ENCODE measurements at regions of chr16 and their contacts with region 1.

Region 1: GRCh38 chr16:63539276-63539675 is 1503.0 kb upstream of the CDH8 start:
- DNase-seq: no peak

Region 2: DNA sequence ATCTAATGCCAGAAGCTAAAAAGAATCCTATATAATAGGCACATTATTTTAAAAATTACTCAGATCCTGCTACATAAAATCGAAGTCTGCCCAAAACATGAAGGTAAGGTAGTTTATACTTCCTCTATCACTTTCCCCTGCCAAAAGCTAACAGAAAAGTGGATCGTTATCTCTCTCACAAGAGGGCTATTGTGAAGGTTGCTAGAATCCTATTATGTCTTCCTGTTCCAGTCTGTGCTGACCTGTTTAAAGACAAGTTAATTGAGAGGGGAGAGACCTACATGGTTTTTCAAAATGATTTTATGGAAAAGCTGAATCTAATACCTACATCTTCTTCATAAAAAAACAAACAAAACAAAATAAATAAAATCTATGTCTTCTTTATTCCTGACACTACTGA is 92.2 kb before region 1 on chr16:
- intact Hi-C with region 1: no loop called
- DNase-seq: no peak

Region 3: DNA sequence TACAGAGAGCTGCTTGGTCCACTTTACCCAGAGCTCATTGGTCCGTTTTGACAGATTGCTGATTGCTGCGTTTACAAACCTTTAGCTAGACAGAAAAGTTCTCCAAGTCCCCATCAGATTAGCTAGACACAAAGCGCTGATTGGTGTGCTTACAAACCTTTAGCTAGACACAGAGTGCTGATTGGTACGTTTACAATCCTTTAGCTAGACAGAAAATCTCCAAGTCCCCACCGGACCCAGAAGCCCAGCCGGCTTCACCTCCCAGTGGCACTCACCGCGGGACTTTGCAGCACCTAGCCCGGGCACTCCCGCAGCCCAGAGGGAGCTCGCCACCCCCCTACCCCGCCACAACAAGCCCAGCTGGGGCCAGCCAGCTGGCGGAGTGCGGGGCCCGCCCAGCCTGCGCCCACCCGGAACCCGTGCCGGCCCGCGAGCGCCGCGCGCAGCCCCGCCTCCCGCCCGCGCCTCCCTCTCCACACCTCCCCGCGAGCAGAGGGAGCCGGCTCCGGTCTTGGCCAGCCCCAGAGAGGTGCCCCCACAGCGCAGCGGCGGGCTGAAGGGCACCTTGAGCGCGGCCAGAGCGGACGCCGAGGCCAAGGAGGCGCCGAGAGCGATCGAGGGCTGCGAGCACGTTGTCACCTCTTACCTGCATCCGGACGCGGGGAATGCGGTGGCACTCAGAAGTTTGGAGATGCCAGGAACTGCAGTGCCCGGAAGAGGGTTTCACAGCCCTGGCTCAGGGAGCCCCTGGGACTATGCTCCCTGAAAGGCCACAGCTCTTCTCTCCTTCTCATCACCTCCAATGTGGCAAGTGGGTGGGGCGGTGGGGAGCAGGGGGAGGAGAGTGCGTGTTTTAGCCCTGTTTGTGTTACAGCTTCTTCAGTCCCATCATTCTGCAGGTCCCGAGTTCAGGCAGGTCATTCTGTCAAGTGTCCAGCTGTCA is 78.0 kb after region 1 on chr16:
- intact Hi-C with region 1: no loop called
- DNase-seq: no peak

Region 4: DNA sequence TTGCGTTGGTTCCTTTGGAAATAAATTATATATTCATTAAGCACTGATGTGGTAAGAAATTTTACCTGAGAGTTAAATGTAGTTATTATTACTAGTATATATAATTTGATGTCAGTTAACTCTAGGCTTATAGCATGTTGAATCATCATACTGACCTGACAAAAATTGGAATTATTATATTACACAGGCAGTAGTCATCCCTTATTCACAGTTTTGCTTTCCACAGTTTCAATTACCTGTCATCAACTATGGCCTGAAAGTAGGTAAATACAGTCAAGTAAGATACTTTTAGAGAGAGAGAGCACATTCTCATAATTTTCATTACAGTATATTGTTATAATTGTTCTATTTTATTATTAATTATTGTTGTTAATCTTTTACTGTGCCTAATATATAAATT is 507.9 kb after region 1 on chr16:
- intact Hi-C with region 1: loop called in 1 of 2 experiments (anchors 5 kb)
- DNase-seq: no peak